Activated CD4-positive, alpha-beta memory T cell treated with anti-CD3 and anti-CD28 coated beads for 36 hours (primary cell): ENCODE measurements at regions of chr12 and their contacts with region 1.

Region 1: DNA sequence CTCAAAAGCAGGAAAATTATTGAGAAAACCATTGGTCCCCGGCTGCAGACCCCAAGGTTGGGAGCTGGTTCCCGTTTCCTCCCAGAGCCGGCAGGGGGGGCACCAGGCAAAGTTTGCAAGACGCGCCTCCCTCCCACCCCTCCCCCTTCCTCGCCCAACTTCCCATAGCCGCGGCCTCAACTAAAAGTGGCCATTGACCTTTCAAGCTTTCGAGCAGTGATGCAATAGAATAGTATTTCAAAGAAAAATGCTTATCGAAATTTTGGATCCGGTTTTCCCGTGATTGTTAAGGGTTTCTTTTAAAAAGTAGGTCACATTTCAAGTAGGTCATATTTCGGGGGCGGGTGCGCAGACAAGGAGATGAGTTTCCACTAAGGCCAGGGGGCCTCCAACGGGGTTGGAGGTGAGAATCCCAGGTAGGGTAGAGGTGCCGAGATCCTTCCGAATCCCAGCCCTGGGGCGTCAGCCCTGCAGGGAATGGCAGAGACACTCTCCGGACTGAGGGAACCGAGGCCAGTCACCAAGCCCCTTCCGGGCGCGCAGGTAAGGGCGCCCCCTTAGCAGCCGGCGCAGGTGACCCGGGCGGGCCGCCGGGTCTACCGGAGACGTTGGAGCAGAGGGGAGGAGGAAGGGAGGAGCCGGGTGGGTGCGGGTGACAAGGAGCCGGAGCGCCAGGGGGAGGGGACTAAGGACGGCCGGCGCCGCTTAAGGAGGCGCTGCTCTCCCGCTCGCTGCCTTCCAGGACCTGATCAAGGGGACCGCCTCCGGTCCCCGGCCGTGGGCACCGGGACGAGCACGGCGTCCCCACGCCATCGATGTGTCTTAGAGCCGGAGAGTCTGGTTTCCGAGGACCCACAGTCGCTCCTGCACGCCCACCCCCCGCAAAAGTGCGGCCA is 2.6 kb upstream of the SOCS2 start:
- DNase-seq: peak; percentile 86
- H3K4me3 Mint-ChIP-seq: peak overlapping the region; percentile 83
- H3K27ac Mint-ChIP-seq: peak overlapping the region; percentile 84
- H3K4me1 Mint-ChIP-seq: peaks cover 24% of the 10 kb centered on the region
- H3K27me3 Mint-ChIP-seq: peaks cover 14% of the 10 kb centered on the region

Region 2: GRCh38 chr12:92928962-92929915 is 640.7 kb before region 1 on chr12 and contains the start of gene EEA1:
- CTCF ChIA-PET with region 1: no interaction called
- POLR2A ChIA-PET with region 1: no interaction called
- intact Hi-C with region 1: loop called (anchors 1 kb)
- DNase-seq: peak; percentile 98
- H3K4me3 Mint-ChIP-seq: peak within 1 kb of the TSS; percentile 85
- H3K27ac Mint-ChIP-seq: peak within 1 kb of the TSS; percentile 95
- H3K4me1 Mint-ChIP-seq: peaks cover 32% of the 10 kb centered on the region
- H3K27me3 Mint-ChIP-seq: no peaks in the 10 kb centered on the region
- total RNA-seq, gene EEA1: 17.5 to 17.7 TPM

Region 3: DNA sequence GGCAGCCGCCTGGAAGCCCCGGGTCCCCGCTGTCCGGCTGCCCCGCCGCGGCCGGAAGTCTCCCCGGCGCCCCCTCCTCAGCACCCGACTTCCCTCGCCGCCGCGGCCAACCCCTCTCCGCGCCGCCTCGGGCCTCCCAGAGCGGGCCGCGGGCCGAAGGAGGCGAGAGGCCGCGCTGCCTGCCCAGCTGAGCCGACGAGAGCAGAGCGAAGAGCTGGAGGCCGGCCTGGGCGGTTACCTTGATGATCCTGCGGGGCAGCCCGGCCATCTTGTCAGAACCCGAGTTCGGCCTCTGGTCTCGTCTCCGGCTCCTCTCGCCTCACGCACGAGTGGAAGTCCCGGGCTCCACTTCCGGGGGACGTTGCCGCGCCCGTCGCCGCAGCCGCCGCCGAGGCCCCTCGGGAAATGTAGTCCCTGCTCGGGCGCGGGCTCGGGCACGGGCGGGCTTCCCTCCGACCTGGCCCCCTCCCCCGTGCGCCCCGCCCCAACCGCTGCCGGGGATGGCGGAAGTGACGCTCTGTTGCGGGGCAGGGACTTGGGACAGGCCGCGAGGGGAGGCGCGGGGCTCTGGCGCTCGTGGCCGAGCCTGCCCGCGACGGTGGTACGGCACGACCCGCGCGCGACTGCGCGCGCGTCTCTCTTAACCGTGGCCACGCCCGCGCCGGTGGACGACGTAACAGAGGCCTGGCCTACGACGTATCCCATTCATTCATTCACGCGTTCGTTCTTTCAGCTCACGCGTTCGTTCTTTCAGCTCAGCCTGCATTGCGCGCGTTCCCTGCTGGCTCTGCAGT is 128.1 kb before region 1 on chr12 and contains the start of gene UBE2N:
- CTCF ChIA-PET with region 1: no interaction called
- POLR2A ChIA-PET with region 1: interaction called, 3 read pairs
- intact Hi-C with region 1: loop called (anchors 2 kb)
- DNase-seq: peak; percentile 97
- H3K4me3 Mint-ChIP-seq: peak within 1 kb of the TSS; percentile 94
- H3K27ac Mint-ChIP-seq: peak within 1 kb of the TSS; percentile 95
- H3K4me1 Mint-ChIP-seq: peaks cover 46% of the 10 kb centered on the region
- H3K27me3 Mint-ChIP-seq: no peaks in the 10 kb centered on the region
- total RNA-seq, gene UBE2N: 177 TPM

Region 4: DNA sequence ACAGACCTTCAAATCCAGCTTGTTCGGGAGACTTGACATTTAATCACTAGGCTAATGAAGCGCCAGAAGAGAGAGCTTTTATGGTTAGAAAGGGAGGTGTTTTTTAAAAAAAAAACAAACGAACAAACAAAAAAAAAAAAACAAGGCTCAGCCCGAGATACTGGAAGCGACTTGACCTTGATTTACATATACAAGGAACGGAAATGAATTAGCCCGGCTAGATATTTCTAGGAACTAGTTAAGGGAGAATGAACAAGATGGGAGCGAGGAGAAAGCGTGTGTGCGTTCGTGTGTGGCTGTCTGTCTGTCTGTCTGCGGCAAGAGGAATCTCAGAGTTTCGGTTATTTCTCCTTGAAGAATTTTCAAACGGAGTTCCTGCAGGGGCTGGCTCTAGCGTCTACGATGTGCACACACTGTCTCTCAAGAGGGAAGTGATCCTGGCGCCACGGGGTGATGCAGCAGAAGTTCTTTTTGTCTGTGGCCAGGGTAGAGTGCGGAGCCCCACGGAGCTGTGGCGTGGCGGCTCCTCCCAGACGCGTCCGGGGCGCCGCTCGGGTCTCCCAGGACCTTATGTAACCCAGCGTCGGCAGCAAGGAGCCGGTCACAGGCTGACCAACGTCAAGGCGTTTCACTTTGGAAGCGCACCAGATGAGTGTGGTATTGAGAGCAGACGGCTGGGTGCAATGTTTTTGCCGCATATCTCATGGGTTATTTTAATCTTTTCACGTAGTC is 21.4 kb after region 1 on chr12:
- CTCF ChIA-PET with region 1: interaction called, 5 read pairs
- POLR2A ChIA-PET with region 1: interaction called, 6 read pairs
- intact Hi-C with region 1: loop called (anchors 2 kb)
- DNase-seq: peak; percentile 48
- H3K4me3 Mint-ChIP-seq: peak overlapping the region; percentile 87
- H3K27ac Mint-ChIP-seq: no peak overlapping the region
- H3K4me1 Mint-ChIP-seq: peaks cover 15% of the 10 kb centered on the region
- H3K27me3 Mint-ChIP-seq: peaks cover 38% of the 10 kb centered on the region

Region 5: DNA sequence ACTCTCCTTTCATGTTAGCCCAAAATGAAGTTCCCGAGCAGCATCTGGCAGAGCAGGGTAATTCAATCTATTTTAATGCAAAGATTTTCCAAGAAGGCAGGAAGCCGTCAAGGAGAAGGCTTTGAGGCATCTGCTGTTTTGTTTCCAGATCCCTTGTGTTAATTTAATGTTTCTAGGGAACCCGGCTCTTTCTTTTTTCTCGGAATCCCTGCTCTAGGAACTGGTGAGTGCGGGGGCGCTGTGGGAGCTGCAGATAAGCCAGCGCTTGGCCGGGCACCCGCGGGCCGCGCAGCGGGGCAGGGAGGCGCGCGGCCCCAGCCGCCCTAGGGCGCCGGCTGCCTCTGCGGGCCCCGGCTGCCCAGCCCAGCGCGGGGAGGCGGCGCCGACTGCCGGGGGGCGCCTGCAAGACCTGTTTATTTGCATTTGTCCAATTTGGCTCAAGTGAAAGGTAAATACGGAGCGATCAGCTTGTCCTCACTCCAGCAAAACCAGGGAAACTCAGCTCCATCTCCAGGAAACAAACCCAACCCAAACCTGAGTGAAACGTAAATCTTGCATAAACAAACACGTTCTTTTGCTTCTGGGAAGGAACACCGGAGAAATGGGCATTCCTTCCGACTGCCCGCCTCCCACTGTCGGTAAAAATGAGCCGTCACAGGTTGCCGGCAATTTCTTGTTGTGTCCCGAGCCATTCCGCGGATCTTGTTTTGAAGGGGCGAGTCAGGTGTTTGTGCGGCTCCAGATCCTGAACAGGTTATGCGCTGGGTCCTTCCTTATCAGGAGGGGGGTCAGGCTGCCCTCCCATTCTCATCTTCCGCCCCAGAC is 172.4 kb after region 1 on chr12:
- CTCF ChIA-PET with region 1: interaction called, 10 read pairs
- POLR2A ChIA-PET with region 1: interaction called, 4 read pairs
- intact Hi-C with region 1: loop called (anchors 1 kb)
- DNase-seq: peak; percentile 77
- H3K4me3 Mint-ChIP-seq: peak overlapping the region; percentile 74
- H3K27ac Mint-ChIP-seq: peak overlapping the region; percentile 81
- H3K4me1 Mint-ChIP-seq: peaks cover 35% of the 10 kb centered on the region
- H3K27me3 Mint-ChIP-seq: no peaks in the 10 kb centered on the region

Region 6: DNA sequence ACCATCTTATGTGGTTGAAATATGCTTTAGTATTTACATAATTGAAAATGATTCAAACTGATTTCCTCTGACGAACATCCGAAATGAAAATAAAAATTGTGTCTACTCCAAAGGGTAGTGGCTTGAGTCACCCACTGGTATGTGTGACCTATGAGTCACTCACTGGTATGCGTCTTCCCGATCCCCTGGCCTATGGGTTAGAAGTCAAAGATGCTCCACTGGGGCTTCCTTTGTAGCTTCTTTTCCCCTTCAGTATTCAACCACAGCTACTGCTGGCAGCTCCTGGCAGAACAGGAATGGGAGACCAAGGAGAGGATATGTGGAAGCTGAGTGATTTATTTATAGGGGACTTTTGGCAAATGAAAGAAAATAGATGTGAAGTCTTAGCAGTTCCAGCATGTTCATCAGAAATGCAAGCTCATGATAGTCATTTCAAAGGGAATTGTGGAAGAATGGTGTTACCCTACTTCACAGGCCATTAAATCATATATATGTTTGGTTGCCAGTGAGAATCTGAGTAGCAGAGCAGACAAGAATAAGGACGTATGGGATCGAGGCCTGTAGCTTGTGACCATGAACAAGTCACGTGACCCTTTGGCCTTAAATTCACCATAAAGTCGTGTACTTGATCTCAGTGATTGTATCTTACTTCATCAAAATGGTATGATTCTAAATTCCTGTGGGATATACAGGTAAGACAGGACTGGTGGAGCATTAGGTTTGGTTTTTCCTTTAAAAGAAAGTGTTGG is 215.5 kb after region 1 on chr12:
- CTCF ChIA-PET with region 1: interaction called, 4 read pairs
- POLR2A ChIA-PET with region 1: interaction called, 3 read pairs
- intact Hi-C with region 1: loop called (anchors 1 kb)
- DNase-seq: peak; percentile 73
- H3K4me3 Mint-ChIP-seq: peak overlapping the region; percentile 16
- H3K27ac Mint-ChIP-seq: peak overlapping the region; percentile 81
- H3K4me1 Mint-ChIP-seq: peaks cover 57% of the 10 kb centered on the region
- H3K27me3 Mint-ChIP-seq: no peaks in the 10 kb centered on the region

Region 7: GRCh38 chr12:94074980-94075928 is 505.4 kb after region 1 on chr12:
- CTCF ChIA-PET with region 1: interaction called, 14 read pairs
- POLR2A ChIA-PET with region 1: no interaction called
- intact Hi-C with region 1: no loop called
- DNase-seq: peak; percentile 24
- H3K4me3 Mint-ChIP-seq: no peak overlapping the region
- H3K27ac Mint-ChIP-seq: no peak overlapping the region
- H3K4me1 Mint-ChIP-seq: peaks cover 16% of the 10 kb centered on the region
- H3K27me3 Mint-ChIP-seq: peaks cover 8% of the 10 kb centered on the region